ENCODE measurements at regions of chr7 and their contacts with region 1.

Region 1: GRCh38 chr7:130069978-130070860 is at the start of gene KLHDC10:
- DNase-seq: peak; percentile 98
- H3K4me3 ChIP-seq: peak within 1 kb of the TSS; percentile 90
- H3K27ac ChIP-seq: peak within 1 kb of the TSS; percentile 78
- H3K4me1 ChIP-seq: peaks cover 22% of the 10 kb centered on the region
- H3K27me3 ChIP-seq: no peaks in the 10 kb centered on the region
- CTCF ChIP-seq: no peak
- total RNA-seq, gene KLHDC10: 46.4 and 47.0 TPM in 2 replicates

Region 2: DNA sequence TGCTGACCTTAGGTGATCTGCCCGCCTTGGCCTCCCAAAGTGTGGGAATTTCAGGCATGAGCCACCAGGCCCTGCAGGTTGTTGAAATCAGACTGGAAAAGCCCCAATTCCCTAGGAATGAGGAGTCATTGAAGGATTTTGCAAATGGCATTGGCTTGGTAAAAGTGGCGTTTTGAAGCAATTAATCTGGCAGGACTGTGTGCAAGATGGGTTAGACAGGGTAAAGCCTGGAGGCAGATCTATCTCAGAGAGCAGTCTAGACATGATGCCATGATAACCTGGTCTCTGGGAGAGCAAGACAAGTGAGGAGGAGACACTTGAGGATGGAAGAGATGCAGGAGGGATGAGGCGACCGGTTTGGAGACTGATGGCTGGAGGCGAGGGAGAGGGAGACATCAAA is 71.8 kb before region 1 on chr7:
- CTCF ChIA-PET with region 1: no interaction called
- POLR2A ChIA-PET with region 1: interaction called, 43 read pairs
- intact Hi-C with region 1: no loop called
- DNase-seq: no peak
- H3K4me3 ChIP-seq: no peak overlapping the region
- H3K27ac ChIP-seq: no peak overlapping the region
- H3K4me1 ChIP-seq: no peaks in the 10 kb centered on the region
- H3K27me3 ChIP-seq: no peaks in the 10 kb centered on the region
- CTCF ChIP-seq: no peak

Region 3: GRCh38 chr7:130242198-130243014 is 172.2 kb after region 1 on chr7:
- CTCF ChIA-PET with region 1: no interaction called
- POLR2A ChIA-PET with region 1: no interaction called
- intact Hi-C with region 1: loop called (anchors 10 kb)
- DNase-seq: peak; percentile 38 to 48
- H3K4me3 ChIP-seq: no peak overlapping the region
- H3K27ac ChIP-seq: no peak overlapping the region
- H3K4me1 ChIP-seq: no peaks in the 10 kb centered on the region
- H3K27me3 ChIP-seq: no peaks in the 10 kb centered on the region
- CTCF ChIP-seq: peak; percentile 95

Region 4: DNA sequence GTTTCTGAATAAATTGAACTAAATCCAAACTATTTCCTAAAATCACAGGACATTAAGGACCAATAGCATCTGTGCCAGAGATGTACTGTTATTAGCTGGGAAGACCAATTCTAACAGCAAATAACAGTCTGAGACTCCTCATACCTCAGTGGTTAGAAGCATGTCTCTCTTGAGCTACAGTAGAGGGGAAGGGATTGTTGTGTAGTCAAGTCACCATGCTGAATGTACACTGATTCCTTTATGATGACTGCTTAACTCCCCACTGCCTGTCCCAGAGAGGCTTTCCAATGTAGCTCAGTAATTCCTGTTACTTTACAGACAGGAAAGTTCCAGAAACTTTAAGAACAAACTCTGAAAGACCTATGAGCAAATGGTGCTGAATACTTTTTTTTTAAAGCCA is 435.5 kb after region 1 on chr7:
- CTCF ChIA-PET with region 1: no interaction called
- POLR2A ChIA-PET with region 1: no interaction called
- intact Hi-C with region 1: no loop called
- DNase-seq: no peak
- H3K4me3 ChIP-seq: no peak overlapping the region
- H3K27ac ChIP-seq: no peak overlapping the region
- H3K4me1 ChIP-seq: no peaks in the 10 kb centered on the region
- H3K27me3 ChIP-seq: no peaks in the 10 kb centered on the region
- CTCF ChIP-seq: no peak

Region 5: DNA sequence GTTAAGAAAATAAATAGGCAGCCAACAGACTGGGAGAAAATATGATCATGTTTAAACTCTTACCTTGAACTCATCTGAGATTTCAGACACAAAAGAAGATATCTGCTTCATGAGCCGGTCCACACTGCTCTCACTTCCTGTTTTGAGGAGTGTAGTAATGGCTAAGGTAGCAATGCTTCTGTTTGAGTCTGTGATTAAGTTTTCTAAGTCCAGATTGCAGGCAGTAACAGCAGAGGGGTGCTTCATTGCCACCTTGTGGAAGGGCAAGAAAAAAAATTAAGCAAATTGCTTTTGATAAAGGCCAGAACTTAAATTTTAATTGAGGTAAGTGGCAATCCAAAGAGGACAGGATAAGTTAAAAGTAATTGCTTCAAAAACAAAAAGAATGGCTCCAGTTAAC is 490.8 kb after region 1 on chr7:
- CTCF ChIA-PET with region 1: interaction called, 3 read pairs
- POLR2A ChIA-PET with region 1: no interaction called
- intact Hi-C with region 1: loop called (anchors 1 kb)
- DNase-seq: peak; percentile 15 to 55
- H3K4me3 ChIP-seq: no peak overlapping the region
- H3K27ac ChIP-seq: no peak overlapping the region
- H3K4me1 ChIP-seq: no peaks in the 10 kb centered on the region
- H3K27me3 ChIP-seq: no peaks in the 10 kb centered on the region
- CTCF ChIP-seq: peak; percentile 77

Region 6: GRCh38 chr7:130758429-130759056 is 688.3 kb after region 1 on chr7:
- CTCF ChIA-PET with region 1: interaction called, 11 read pairs
- POLR2A ChIA-PET with region 1: interaction called, 4 read pairs
- intact Hi-C with region 1: loop called (anchors 1 kb)
- DNase-seq: peak in 1 of 2 experiments; percentile 50
- H3K4me3 ChIP-seq: no peak overlapping the region
- H3K27ac ChIP-seq: no peak overlapping the region
- H3K4me1 ChIP-seq: no peaks in the 10 kb centered on the region
- H3K27me3 ChIP-seq: no peaks in the 10 kb centered on the region
- CTCF ChIP-seq: peak; percentile 95

Measured in PC-9 (cell line).